ENCODE measurements at regions of chr19 and their contacts with region 1.

Region 1: DNA sequence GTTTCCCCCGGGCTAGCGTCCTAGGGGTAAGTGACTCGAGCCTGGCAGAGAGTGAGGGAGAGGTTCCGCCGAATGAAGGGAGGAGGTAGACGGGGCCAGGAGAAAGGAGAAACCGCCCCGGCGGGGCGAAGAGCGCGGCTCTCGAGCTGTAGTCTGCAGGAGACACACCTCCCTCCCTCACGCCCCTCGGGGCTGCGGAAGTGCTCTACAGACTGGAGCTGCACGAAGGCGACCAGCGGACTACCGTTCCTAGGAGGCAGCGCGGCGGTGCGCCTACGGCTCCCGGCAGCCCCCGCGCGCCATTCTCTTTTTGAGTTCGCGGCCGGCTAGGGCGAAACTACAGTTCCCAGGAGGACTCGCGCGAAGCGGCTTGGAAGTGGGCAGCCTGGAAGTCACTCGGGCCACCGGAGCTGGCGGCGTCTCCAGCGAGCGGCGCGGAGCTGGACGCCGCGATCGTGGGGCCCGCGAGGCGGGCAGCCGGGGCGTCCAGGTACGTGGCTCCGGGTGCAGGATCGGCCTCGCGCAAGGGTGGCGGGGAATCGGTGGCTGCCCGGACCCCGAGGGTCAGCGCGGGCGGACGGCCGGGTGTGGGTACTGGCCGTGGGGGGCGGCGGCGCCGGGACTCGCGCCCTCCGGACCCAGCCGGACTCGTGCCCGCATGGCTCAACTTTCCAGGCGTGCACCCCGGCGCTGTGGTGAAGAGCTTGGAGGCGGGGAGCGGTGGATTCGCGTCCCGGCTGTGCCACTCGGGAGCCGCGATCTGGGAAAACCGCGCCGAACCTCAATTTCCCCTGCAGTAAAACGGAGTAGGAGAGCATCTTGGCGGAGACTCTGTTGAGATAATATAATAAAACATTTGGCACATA is at the start of gene SIPA1L3:
- DNase-seq: peak; percentile 97
- H3K4me3 ChIP-seq: peak within 1 kb of the TSS; percentile 62 to 98
- H3K27ac ChIP-seq: peak within 1 kb of the TSS; percentile 50 to 74
- H3K4me1 ChIP-seq: peaks cover 7% of the 10 kb centered on the region
- H3K27me3 ChIP-seq: no peaks in the 10 kb centered on the region
- CTCF ChIP-seq: peak in 1 of 4 experiments; percentile 32
- POLR2A ChIP-seq: peak; percentile 83
- total RNA-seq, gene SIPA1L3: 48.8 to 63.5 TPM

Region 2: GRCh38 chr19:37953533-37954303 is 46.6 kb after region 1 on chr19:
- intact Hi-C with region 1: no loop called
- DNase-seq: no peak
- H3K4me3 ChIP-seq: no peak overlapping the region
- H3K27ac ChIP-seq: no peak overlapping the region
- H3K4me1 ChIP-seq: no peaks in the 10 kb centered on the region
- H3K27me3 ChIP-seq: no peaks in the 10 kb centered on the region
- CTCF ChIP-seq: no peak
- POLR2A ChIP-seq: no peak

Region 3: GRCh38 chr19:38095411-38096308 is 188.6 kb after region 1 on chr19:
- intact Hi-C with region 1: loop called (anchors 10 kb)
- DNase-seq: peak; percentile 87
- H3K4me3 ChIP-seq: no peak overlapping the region
- H3K27ac ChIP-seq: peak overlapping the region; percentile 29 to 61
- H3K4me1 ChIP-seq: no peaks in the 10 kb centered on the region
- H3K27me3 ChIP-seq: no peaks in the 10 kb centered on the region
- CTCF ChIP-seq: peak in 3 of 4 experiments; percentile 57 to 71 (median 62)
- POLR2A ChIP-seq: no peak

Region 4: DNA sequence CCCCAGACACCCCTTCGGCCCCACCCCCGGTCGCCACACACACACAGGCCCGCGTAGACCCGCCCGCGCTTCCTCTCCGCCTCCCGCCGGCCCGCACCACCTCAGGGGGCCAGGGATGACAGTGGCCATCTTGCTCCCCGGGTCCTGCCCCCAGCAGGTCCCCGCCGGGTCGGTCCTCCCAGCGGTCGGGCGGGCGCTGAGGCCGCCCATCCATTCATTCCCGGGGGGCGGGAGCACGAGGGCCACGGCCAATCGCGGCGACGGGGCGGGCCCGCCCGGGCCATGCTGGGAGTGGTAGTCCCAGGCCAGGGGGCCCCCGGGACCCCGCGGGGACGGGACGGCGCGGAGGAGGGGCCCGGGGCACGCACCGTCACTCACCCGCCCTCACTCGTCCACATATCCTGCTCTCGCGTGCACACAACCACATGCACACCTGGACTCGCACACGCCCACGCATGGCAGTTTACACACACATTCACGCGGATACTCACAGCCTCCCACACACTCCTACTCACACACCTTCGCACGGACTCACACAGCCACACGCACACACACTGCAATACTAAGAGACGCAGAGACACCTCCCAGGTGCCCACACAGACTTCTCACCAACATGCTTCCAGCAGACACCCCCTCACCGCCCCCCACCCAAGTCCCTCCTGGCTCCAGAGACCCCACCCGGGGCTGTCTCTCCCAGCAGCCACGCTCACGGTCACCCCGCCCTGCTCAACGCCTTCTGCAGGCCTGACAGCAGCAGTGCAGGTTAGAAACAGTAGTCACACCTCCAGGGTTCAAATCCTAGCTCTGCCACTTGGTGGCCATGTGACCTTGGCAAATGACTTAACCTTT is 317.1 kb after region 1 on chr19 and contains the start of gene DPF1:
- intact Hi-C with region 1: loop called (anchors 5 kb)
- DNase-seq: no peak
- H3K4me3 ChIP-seq: peak within 1 kb of the TSS; percentile 12 to 26
- H3K27ac ChIP-seq: no peak within 1 kb of the TSS
- H3K4me1 ChIP-seq: peaks cover 11% of the 10 kb centered on the region
- H3K27me3 ChIP-seq: peaks cover 19% of the 10 kb centered on the region
- CTCF ChIP-seq: no peak
- POLR2A ChIP-seq: no peak
- total RNA-seq, gene DPF1: 1.8 TPM in 1 of 2 donors, not detected in the other

Measured in prostate gland (tissue), 2 donors.